WTC11 (cell line): ENCODE measurements at regions of chr16 and their contacts with region 1.

Region 1: GRCh38 chr16:88811769-88812512 is at the start of gene APRT:
- DNase-seq: peak; percentile 95
- ATAC-seq: peak; percentile 61
- H3K4me3 Mint-ChIP-seq: peak within 1 kb of the TSS; percentile 87
- H3K27ac Mint-ChIP-seq: peak within 1 kb of the TSS; percentile 98
- H3K4me1 Mint-ChIP-seq: peaks cover 14% of the 10 kb centered on the region
- H3K27me3 Mint-ChIP-seq: no peaks in the 10 kb centered on the region
- CTCF ChIP-seq: no peak
- total RNA-seq, gene APRT: 272 to 288 TPM (median 282 TPM) in 3 replicates

Region 2: DNA sequence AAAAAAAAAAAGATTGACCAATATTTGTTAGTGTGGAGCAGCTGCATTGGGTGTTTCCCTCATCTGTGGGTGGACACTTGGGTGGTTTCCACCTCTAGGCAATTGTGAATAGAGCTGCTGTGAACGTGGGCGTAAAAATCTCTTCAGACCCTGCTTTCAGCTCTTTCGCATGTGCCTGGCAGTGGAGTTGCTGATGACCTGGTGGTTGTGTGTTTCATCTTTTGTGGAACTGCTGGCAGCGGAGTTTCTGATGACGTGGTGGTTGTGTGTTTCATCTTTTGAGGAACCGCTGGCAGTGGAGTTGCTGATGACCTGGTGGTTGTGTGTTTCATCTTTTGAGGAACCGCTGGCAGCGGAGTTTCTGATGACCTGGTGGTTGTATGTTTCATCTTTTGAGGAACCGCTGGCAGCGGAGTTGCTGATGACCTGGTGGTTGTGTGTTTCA is 220.3 kb before region 1 on chr16:
- CTCF ChIA-PET with region 1: no interaction called
- POLR2A ChIA-PET with region 1: no interaction called
- DNase-seq: no peak
- ATAC-seq: no peak
- H3K4me3 Mint-ChIP-seq: no peak overlapping the region
- H3K27ac Mint-ChIP-seq: no peak overlapping the region
- H3K4me1 Mint-ChIP-seq: no peaks in the 10 kb centered on the region
- H3K27me3 Mint-ChIP-seq: no peaks in the 10 kb centered on the region
- CTCF ChIP-seq: no peak

Region 3: GRCh38 chr16:88856828-88857733 is 45.1 kb after region 1 on chr16 and contains the starts of genes GALNS and TRAPPC2L:
- CTCF ChIA-PET with region 1: interaction called, 22 read pairs
- POLR2A ChIA-PET with region 1: interaction called, 5 read pairs
- DNase-seq: peak; percentile 99
- ATAC-seq: peak; percentile 88
- H3K4me3 Mint-ChIP-seq: peak within 1 kb of the TSS; percentile 99
- H3K27ac Mint-ChIP-seq: peak within 1 kb of the TSS; percentile 94
- H3K4me1 Mint-ChIP-seq: peaks cover 20% of the 10 kb centered on the region
- H3K27me3 Mint-ChIP-seq: no peaks in the 10 kb centered on the region
- CTCF ChIP-seq: no peak
- total RNA-seq, gene GALNS: 23.0 to 29.5 TPM (median 25.8 TPM) in 3 replicates
- total RNA-seq, gene TRAPPC2L: 63.1 to 82.0 TPM (median 64.5 TPM) in 3 replicates